ENCODE measurements at regions of chr6 and their contacts with region 1.

Region 1: DNA sequence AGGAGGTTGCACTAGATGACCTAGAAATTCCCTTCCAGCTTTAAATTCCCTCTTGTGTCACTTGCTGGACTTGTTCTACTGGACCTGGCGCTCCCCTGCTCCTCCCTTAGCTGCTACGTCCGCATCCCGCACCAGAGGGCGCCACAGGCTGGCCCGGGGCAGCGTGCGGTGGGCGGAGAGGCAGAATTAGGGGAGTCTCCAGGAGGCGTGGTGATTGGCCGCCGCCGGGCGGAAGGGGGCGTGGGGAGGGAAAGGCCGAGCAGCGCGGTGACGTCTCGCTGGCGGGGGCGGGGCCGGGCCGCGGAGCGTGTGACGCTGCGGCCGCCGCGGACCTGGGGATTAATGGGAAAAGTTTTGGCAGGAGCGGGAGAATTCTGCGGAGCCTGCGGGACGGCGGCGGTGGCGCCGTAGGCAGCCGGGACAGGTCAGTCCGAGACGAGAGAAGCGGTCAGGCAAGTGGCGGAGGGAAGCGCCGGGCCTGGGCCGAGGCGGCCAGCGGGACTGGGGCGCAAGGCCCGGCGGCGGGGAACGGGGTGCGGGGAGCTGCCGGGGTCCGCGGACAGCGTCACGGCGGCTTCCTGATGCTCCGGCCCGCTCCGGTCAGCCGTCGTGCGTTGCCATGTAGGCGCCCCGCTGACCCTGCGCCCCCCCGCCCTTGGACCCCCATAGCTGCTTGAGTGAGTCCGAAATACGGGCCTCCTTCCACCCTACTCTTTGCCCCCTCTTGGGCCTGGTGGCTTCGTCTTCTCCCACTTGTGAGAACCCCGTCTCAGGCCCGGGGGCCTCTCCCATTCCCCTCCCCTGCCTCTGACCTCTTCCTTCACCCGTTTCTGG is at the start of gene PPARD:
- DNase-seq: peak; percentile 100
- CTCF ChIP-seq: peak; percentile 99

Region 2: GRCh38 chr6:35452186-35453090 is 110.0 kb after region 1 on chr6 and contains the start of gene FANCE:
- in situ Hi-C with region 1: loop called (anchors 5 kb)
- DNase-seq: peak; percentile 98
- CTCF ChIP-seq: no peak

Region 3: DNA sequence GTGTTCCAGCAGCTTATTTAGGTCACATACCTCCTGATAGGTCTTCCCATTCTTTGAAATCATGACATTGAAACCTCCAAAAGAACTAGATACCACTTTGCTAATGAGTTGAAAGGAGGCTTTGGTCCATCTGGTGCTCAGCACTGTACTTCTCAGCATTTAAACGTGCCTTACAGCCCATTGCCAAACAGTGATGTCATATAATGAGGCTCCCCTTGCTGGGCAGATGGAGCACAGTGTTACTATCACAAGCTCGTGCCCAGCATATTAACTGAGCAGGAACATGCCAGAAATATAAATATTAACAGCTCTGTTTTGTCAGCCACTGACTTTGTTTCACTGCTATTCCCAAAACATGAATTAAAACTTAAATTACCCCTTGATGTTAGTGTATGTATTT is 762.4 kb after region 1 on chr6:
- in situ Hi-C with region 1: no loop called
- DNase-seq: no peak
- CTCF ChIP-seq: no peak

Measured in GM13976 (cell line).